B cell (primary cell): ENCODE measurements at regions of chr1 and their contacts with region 1.

Region 1: DNA sequence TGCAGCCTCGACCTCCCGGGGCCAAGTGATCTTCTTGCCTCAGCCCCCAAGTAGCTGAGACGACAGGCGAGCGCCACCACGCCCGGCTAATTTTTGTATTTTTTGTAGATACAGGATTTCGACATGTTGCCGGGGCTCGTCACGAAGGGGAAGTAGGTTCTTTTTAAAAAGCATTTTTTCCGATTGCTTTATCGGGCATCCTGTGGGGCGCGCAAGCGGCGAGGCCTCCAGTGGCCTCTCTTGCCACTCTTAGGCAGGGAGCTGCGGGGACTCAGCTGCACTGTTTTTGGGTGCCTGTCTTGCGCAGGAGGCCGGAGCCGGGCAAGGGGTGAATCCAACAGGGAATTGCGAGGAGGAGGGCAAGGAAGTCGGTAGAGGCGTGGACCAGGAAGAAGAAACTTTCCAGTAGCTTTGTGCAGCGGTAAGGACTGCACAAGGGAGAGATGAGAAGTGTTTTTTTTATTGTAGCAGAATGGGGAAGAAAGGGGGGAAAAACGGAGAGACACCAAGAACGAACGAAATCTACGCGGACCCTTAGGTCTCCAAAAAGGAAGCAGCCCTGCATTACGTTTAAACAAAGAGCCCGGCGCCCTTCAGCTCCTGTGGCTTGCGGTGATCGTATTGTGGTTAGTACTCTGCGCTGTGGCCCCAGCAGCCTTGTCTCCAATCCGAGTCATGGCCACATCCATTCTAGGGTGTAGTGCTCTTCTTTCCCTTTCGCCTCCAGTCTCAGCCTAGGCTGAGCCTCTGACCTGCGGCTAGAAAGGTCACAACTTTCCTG is 164.8 kb downstream of the PPIAL4G start:
- DNase-seq: peak; percentile 78
- ATAC-seq: peak; percentile 79
- H3K4me3 ChIP-seq: peak overlapping the region; percentile 52 to 90 (median 64)
- H3K4me3 Mint-ChIP-seq: peak overlapping the region; percentile 91
- H3K27ac ChIP-seq: peak overlapping the region; percentile 33 to 68
- H3K27ac Mint-ChIP-seq: peak overlapping the region; percentile 90
- H3K4me1 ChIP-seq: peaks cover 16 to 30% of the 10 kb centered on the region in 2 donors
- H3K4me1 Mint-ChIP-seq: peaks cover 33% of the 10 kb centered on the region
- H3K27me3 ChIP-seq: no peaks in the 10 kb centered on the region
- H3K27me3 Mint-ChIP-seq: no peaks in the 10 kb centered on the region
- CTCF ChIP-seq: no peak

Region 2: GRCh38 chr1:147840907-147841306 is 477.4 kb before region 1 on chr1:
- CTCF ChIA-PET with region 1: no interaction called
- POLR2A ChIA-PET with region 1: no interaction called
- intact Hi-C with region 1: no loop called
- DNase-seq: no peak
- ATAC-seq: no peak
- H3K4me3 ChIP-seq: no peak overlapping the region
- H3K4me3 Mint-ChIP-seq: no peak overlapping the region
- H3K27ac ChIP-seq: no peak overlapping the region
- H3K27ac Mint-ChIP-seq: no peak overlapping the region
- H3K4me1 ChIP-seq: no peaks in the 10 kb centered on the region
- H3K4me1 Mint-ChIP-seq: no peaks in the 10 kb centered on the region
- H3K27me3 ChIP-seq: peaks cover 0 to 6% (median 2%) of the 10 kb centered on the region in 4 experiments
- H3K27me3 Mint-ChIP-seq: peaks cover 19% of the 10 kb centered on the region
- CTCF ChIP-seq: no peak

Region 3: GRCh38 chr1:148263128-148263905 is 55.0 kb before region 1 on chr1:
- CTCF ChIA-PET with region 1: interaction called, 3 read pairs
- POLR2A ChIA-PET with region 1: interaction called, 5 read pairs
- intact Hi-C with region 1: loop called (anchors 5 kb)
- DNase-seq: peak; percentile 86
- ATAC-seq: peak; percentile 84
- H3K4me3 ChIP-seq: peak overlapping the region; percentile 52 to 85 (median 62)
- H3K4me3 Mint-ChIP-seq: peak overlapping the region; percentile 99
- H3K27ac ChIP-seq: peak overlapping the region; percentile 75 to 86
- H3K27ac Mint-ChIP-seq: peak overlapping the region; percentile 99
- H3K4me1 ChIP-seq: peaks cover 4 to 7% of the 10 kb centered on the region in 2 donors
- H3K4me1 Mint-ChIP-seq: peaks cover 14% of the 10 kb centered on the region
- H3K27me3 ChIP-seq: peaks cover 0 to 2% (median 0%) of the 10 kb centered on the region in 4 experiments
- H3K27me3 Mint-ChIP-seq: no peaks in the 10 kb centered on the region
- CTCF ChIP-seq: no peak

Region 4: DNA sequence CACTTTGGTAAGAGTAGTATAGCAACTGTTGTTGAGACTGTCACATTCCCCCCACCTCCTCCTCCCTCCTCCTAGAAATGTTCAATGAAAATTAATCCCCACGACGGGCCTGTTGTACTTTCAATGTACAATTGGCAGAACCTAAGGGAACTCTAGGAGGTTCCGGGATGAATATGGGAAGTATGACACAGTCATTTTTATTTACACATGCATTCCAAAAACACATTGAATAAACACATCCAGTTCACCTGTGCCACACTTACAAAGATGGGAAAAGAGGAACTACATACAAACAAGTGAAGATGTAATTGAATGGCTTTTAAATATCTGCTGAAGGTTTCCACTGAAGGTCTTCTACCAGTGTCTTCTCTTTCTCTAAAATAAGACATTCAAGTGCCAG is 21.8 kb before region 1 on chr1:
- CTCF ChIA-PET with region 1: no interaction called
- POLR2A ChIA-PET with region 1: no interaction called
- intact Hi-C with region 1: no loop called
- DNase-seq: no peak
- ATAC-seq: no peak
- H3K4me3 ChIP-seq: no peak overlapping the region
- H3K4me3 Mint-ChIP-seq: no peak overlapping the region
- H3K27ac ChIP-seq: no peak overlapping the region
- H3K27ac Mint-ChIP-seq: no peak overlapping the region
- H3K4me1 ChIP-seq: no peaks in the 10 kb centered on the region
- H3K4me1 Mint-ChIP-seq: no peaks in the 10 kb centered on the region
- H3K27me3 ChIP-seq: no peaks in the 10 kb centered on the region
- H3K27me3 Mint-ChIP-seq: no peaks in the 10 kb centered on the region
- CTCF ChIP-seq: no peak

Region 5: GRCh38 chr1:148372731-148373130 is 54.4 kb after region 1 on chr1:
- CTCF ChIA-PET with region 1: no interaction called
- POLR2A ChIA-PET with region 1: no interaction called
- intact Hi-C with region 1: no loop called
- DNase-seq: no peak
- ATAC-seq: no peak
- H3K4me3 ChIP-seq: no peak overlapping the region
- H3K4me3 Mint-ChIP-seq: no peak overlapping the region
- H3K27ac ChIP-seq: peak overlapping the region in 1 of 2 donors; percentile 67
- H3K27ac Mint-ChIP-seq: peak overlapping the region; percentile 34
- H3K4me1 ChIP-seq: peaks cover 22 to 26% of the 10 kb centered on the region in 2 donors
- H3K4me1 Mint-ChIP-seq: peaks cover 22% of the 10 kb centered on the region
- H3K27me3 ChIP-seq: no peaks in the 10 kb centered on the region
- H3K27me3 Mint-ChIP-seq: no peaks in the 10 kb centered on the region
- CTCF ChIP-seq: no peak